AG04450 (cell line): ENCODE measurements at regions of chr11 and their contacts with region 1.

Region 1: DNA sequence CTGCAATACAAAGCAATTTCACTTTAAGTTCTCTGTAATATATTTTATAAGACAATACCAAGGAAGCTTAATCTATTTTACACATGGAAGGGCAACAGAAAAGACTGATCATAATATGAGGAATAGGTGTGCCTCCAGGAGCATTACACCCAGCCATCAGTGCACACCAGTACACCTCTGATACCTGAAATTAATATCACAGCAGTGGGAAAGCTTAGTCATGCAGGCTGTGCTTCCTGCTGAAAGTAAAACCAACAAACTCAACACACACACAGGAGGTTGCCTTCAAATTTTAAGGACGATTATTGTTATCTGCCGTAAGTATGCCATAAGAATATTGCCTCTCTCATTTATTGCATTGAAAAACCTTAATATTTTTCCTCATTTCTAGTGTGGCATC is 1119.1 kb upstream of the TENM4 start:
- DNase-seq: no peak
- H3K4me3 ChIP-seq: no peak overlapping the region
- H3K27ac ChIP-seq: no peak overlapping the region
- H3K27me3 ChIP-seq: no peaks in the 10 kb centered on the region
- CTCF ChIP-seq: no peak

Region 2: GRCh38 chr11:80613655-80614054 is 53.7 kb after region 1 on chr11:
- CTCF ChIA-PET with region 1: interaction called, 12 read pairs
- POLR2A ChIA-PET with region 1: no interaction called
- DNase-seq: no peak
- H3K4me3 ChIP-seq: no peak overlapping the region
- H3K27ac ChIP-seq: no peak overlapping the region
- H3K27me3 ChIP-seq: no peaks in the 10 kb centered on the region
- CTCF ChIP-seq: no peak